ENCODE measurements at regions of chr4 and their contacts with region 1.

Region 1: DNA sequence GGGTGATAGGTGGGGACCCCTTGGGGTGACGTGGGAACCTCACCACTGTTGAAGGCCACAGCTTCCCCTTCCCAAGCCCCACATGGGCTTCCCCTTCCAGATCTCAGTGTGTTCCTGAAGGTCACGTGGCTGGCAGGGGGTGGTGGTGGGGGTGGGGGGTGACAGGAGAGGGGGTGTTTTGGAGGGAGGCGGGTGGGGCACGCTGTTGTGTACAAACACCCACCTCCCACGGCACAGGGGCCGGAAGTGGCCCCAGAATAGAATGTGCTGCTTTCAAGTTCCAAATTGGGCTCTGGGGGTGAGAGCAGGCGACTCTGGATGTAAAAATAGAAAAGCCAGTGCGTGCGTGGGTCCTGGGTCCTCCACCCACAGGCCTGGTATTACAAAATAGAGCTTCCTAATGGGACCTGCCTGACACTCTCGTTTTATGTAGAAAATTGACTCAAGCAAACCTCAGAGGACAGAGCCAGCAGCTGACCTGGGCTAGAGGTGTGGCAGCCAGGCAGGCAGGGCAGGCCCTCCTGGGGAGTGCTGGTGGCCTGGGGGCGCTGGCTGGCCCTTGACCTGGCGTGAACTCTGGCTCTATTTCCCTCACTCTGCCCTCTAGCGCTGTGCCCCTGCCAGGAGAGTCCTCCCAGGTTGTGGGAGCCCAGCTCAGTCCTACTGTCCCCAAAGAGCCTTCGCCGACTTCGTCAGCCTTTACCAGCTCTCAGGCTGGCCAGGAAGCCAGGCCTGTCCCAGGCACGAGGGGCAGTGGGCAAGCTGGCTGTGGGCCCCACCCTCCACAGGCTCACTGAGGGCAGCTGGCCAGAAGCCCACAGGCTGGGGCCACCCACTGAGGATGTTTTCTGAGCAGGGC is 5.4 kb upstream of the SH3BP2 start:
- DNase-seq: peak in 9 of 10 donors; percentile 26 to 77 (median 52)
- ATAC-seq: peak; percentile 53 to 59
- H3K4me3 Mint-ChIP-seq: peak overlapping the region; percentile 12 to 79 (median 63)
- H3K27ac Mint-ChIP-seq: peak overlapping the region; percentile 88 to 95 (median 92)
- H3K4me1 Mint-ChIP-seq: peaks cover 20 to 65% (median 57%) of the 10 kb centered on the region in 4 donors
- H3K27me3 Mint-ChIP-seq: no peaks in the 10 kb centered on the region

Region 2: GRCh38 chr4:2673157-2673556 is 114.3 kb before region 1 on chr4:
- POLR2A ChIA-PET with region 1: no interaction called
- DNase-seq: no peak
- ATAC-seq: no peak
- H3K4me3 Mint-ChIP-seq: no peak overlapping the region
- H3K27ac Mint-ChIP-seq: peak overlapping the region in 3 of 10 donors; percentile 36 to 79 (median 51)
- H3K4me1 Mint-ChIP-seq: peaks cover 18 to 36% (median 23%) of the 10 kb centered on the region in 4 donors
- H3K27me3 Mint-ChIP-seq: no peaks in the 10 kb centered on the region

Region 3: GRCh38 chr4:2800691-2801596 is 13.5 kb after region 1 on chr4:
- POLR2A ChIA-PET with region 1: interaction called, 32 read pairs
- DNase-seq: peak in 2 of 10 donors; percentile 41 to 56
- ATAC-seq: peak in 1 of 2 donors; percentile 16
- H3K4me3 Mint-ChIP-seq: peak overlapping the region in 7 of 10 donors; percentile 41 to 79 (median 56)
- H3K27ac Mint-ChIP-seq: peak overlapping the region in 4 of 10 donors; percentile 35 to 79 (median 74)
- H3K4me1 Mint-ChIP-seq: peaks cover 18 to 72% (median 43%) of the 10 kb centered on the region in 4 donors
- H3K27me3 Mint-ChIP-seq: no peaks in the 10 kb centered on the region

Region 4: DNA sequence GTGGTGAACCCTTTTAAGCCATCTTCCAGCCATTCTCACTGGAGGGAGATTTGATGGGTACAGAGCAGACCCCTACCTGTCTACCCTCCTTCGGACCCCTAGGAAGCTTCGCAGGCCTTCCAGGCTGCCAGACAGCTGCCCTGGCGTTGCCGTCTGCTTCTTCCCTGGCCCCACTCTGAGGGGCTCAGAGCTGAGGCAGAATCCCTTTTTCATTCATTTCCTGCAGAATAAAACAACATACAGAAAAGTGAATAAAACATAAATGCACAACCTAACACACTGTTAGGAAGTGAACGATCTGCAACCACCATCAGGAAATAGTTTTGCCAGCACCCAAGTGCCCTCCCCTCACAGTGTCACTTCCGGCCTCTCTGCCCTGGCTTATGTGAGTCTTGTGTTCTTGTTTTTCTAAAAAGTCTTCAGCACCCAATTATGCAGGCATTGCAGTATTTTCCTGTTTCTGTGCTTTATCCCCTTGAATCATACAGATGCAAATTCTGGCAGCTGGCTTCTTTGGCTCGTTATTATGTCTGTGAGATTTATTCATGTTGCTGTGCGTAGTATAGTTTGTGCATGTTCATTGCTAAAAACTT is 50.5 kb after region 1 on chr4:
- POLR2A ChIA-PET with region 1: interaction called, 11 read pairs
- DNase-seq: peak; percentile 44 to 88 (median 74)
- ATAC-seq: peak; percentile 96 to 98
- H3K4me3 Mint-ChIP-seq: peak overlapping the region; percentile 70 to 95 (median 87)
- H3K27ac Mint-ChIP-seq: peak overlapping the region; percentile 86 to 99 (median 92)
- H3K4me1 Mint-ChIP-seq: peaks cover 29 to 83% (median 68%) of the 10 kb centered on the region in 4 donors
- H3K27me3 Mint-ChIP-seq: no peaks in the 10 kb centered on the region

Region 5: GRCh38 chr4:2843263-2843940 is 55.9 kb after region 1 on chr4 and contains the start of gene ADD1:
- POLR2A ChIA-PET with region 1: interaction called, 11 read pairs
- DNase-seq: peak; percentile 89 to 100 (median 94)
- ATAC-seq: peak; percentile 85 to 94
- H3K4me3 Mint-ChIP-seq: peak within 1 kb of the TSS; percentile 90 to 97 (median 92)
- H3K27ac Mint-ChIP-seq: peak within 1 kb of the TSS; percentile 87 to 96 (median 93)
- H3K4me1 Mint-ChIP-seq: peaks cover 23 to 74% (median 69%) of the 10 kb centered on the region in 4 donors
- H3K27me3 Mint-ChIP-seq: no peaks in the 10 kb centered on the region
- polyA plus RNA-seq, gene ADD1: 129 to 151 (median 150) TPM